Endothelial cell of umbilical vein (primary cell): ENCODE measurements at regions of chr2 and their contacts with region 1.

Region 1: GRCh38 chr2:120174963-120175581 is 48.1 kb downstream of the TMEM185B start:
- DNase-seq: peak; percentile 75
- H3K4me3 ChIP-seq: no peak overlapping the region
- H3K27ac ChIP-seq: no peak overlapping the region
- H3K4me1 ChIP-seq: no peaks in the 10 kb centered on the region
- H3K27me3 ChIP-seq: no peaks in the 10 kb centered on the region
- CTCF ChIP-seq: peak; percentile 46 to 57
- POLR2A ChIP-seq: no peak

Region 2: DNA sequence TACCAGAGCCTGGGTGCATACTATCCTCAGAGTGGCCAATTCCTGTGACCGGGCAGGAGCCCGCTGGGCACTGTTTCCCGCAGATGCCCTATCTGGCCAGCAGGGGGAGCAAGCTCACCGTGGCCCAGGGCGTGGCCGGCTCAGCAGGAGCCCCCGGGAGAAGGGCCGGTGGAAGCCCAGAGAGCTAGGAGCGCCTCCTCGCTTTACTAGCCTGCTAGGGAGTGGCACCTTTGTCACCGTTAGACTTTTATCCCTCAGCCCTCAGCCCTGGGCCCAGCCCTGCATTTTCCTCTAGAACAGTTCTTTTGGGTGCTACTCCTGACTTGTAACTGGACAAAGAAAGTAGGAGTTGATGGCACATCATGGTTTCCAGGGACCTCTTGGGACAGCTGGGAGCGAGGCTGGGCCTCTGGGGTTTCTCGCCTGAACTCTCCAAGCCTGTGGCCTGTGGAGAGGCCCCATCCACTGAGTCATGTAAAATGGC is 472.1 kb before region 1 on chr2:
- CTCF ChIA-PET with region 1: interaction called, 111 read pairs
- POLR2A ChIA-PET with region 1: no interaction called
- dilution Hi-C with region 1: no loop called
- intact Hi-C with region 1: loop called (anchors 1 kb)
- DNase-seq: peak; percentile 67
- H3K4me3 ChIP-seq: no peak overlapping the region
- H3K27ac ChIP-seq: no peak overlapping the region
- H3K4me1 ChIP-seq: no peaks in the 10 kb centered on the region
- H3K27me3 ChIP-seq: no peaks in the 10 kb centered on the region
- CTCF ChIP-seq: peak; percentile 96
- POLR2A ChIP-seq: no peak

Region 3: GRCh38 chr2:119826370-119826961 is 348.6 kb before region 1 on chr2:
- CTCF ChIA-PET with region 1: interaction called, 26 read pairs
- POLR2A ChIA-PET with region 1: no interaction called
- dilution Hi-C with region 1: no loop called
- intact Hi-C with region 1: loop called (anchors 1 kb)
- DNase-seq: peak; percentile 49
- H3K4me3 ChIP-seq: no peak overlapping the region
- H3K27ac ChIP-seq: no peak overlapping the region
- H3K4me1 ChIP-seq: peaks cover 9% of the 10 kb centered on the region
- H3K27me3 ChIP-seq: no peaks in the 10 kb centered on the region
- CTCF ChIP-seq: peak; percentile 68 to 71
- POLR2A ChIP-seq: no peak

Region 4: GRCh38 chr2:120012771-120013596 is 162.1 kb before region 1 on chr2 and contains the start of gene EPB41L5:
- CTCF ChIA-PET with region 1: interaction called, 17 read pairs
- POLR2A ChIA-PET with region 1: no interaction called
- dilution Hi-C with region 1: no loop called
- intact Hi-C with region 1: loop called (anchors 2 kb)
- DNase-seq: peak; percentile 90
- H3K4me3 ChIP-seq: peak within 1 kb of the TSS; percentile 35 to 88 (median 46)
- H3K27ac ChIP-seq: peak within 1 kb of the TSS; percentile 30
- H3K4me1 ChIP-seq: peaks cover 24% of the 10 kb centered on the region
- H3K27me3 ChIP-seq: no peaks in the 10 kb centered on the region
- CTCF ChIP-seq: no peak
- POLR2A ChIP-seq: no peak
- total RNA-seq, gene EPB41L5: 13.6 and 15.1 TPM in 2 replicates

Region 5: GRCh38 chr2:120109186-120110061 is 65.6 kb before region 1 on chr2:
- CTCF ChIA-PET with region 1: interaction called, 255 read pairs
- POLR2A ChIA-PET with region 1: no interaction called
- dilution Hi-C with region 1: no loop called
- intact Hi-C with region 1: loop called (anchors 1 kb)
- DNase-seq: peak; percentile 64
- H3K4me3 ChIP-seq: no peak overlapping the region
- H3K27ac ChIP-seq: no peak overlapping the region
- H3K4me1 ChIP-seq: peaks cover 26% of the 10 kb centered on the region
- H3K27me3 ChIP-seq: no peaks in the 10 kb centered on the region
- CTCF ChIP-seq: peak; percentile 18 to 30
- POLR2A ChIP-seq: no peak

Region 6: DNA sequence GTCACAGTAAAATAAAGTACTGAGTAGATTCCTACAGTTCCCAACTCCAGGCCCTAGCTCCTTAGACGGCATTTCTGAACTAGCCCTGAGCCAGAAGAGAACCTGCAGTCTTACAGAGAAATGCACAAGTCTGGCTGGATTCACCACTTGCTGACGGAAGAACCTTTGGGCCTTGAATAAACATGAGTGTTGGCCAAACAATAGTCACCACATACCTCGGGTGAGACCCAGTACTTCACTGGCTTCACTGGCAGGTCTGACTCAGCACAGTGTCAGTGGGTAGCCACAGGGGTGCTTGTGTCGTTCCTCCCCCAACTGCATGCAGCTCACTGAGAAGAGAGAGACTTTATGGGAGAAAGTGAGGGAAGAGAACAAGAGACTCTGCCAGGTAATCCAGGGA is 40.8 kb before region 1 on chr2:
- CTCF ChIA-PET with region 1: interaction called, 93 read pairs
- POLR2A ChIA-PET with region 1: interaction called, 3 read pairs
- dilution Hi-C with region 1: no loop called
- intact Hi-C with region 1: loop called (anchors 2 kb)
- DNase-seq: peak; percentile 89
- H3K4me3 ChIP-seq: no peak overlapping the region
- H3K27ac ChIP-seq: peak overlapping the region; percentile 82
- H3K4me1 ChIP-seq: peaks cover 37% of the 10 kb centered on the region
- H3K27me3 ChIP-seq: no peaks in the 10 kb centered on the region
- CTCF ChIP-seq: no peak
- POLR2A ChIP-seq: peak; percentile 61

Region 7: DNA sequence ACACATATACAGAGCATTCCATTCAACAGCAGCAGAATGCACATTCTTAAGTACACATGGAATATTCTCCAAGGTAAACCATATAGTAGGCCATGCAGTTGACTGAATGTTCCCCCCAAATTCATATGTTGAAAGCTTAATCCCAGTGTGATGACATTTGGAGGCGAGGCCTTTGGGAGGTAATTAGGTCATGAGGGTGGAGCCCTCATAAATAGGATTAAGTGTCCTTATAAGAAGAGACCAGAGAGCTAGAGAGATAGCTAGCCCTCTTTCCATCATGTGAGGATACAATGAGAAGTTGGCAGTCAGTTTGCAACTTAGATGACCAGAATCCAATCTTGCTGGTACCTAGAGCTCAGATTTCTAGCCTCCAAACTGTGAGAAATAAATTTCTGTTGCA is 20.5 kb after region 1 on chr2:
- CTCF ChIA-PET with region 1: interaction called, 12 read pairs
- POLR2A ChIA-PET with region 1: no interaction called
- dilution Hi-C with region 1: no loop called
- intact Hi-C with region 1: no loop called
- DNase-seq: no peak
- H3K4me3 ChIP-seq: no peak overlapping the region
- H3K27ac ChIP-seq: no peak overlapping the region
- H3K4me1 ChIP-seq: no peaks in the 10 kb centered on the region
- H3K27me3 ChIP-seq: peaks cover 5 to 12% of the 10 kb centered on the region in 2 experiments
- CTCF ChIP-seq: no peak
- POLR2A ChIP-seq: no peak